Psoas muscle (tissue), 8 donors: ENCODE measurements at regions of chr6 and their contacts with region 1.

Region 1: DNA sequence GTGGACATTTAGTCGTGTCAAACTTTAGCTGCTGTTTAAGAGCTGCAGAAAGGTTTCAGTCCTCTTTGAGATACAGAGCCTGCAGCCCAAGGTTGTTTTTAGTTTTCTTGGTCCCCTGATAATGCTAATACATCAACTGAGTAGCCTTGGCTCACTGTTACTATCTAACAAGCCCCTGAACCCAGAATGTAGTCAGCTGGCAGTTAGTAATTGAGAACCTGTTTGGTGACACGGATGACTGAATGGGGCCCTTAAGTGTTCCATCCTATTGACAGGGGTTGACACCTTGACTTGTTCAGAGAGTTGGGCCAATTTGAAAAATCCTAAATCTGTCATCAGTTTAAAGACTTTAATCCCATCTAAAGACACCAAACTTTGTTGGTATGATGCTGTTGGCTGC is 2.8 kb downstream of the RTN4IP1 start:
- DNase-seq: no peak
- ATAC-seq: no peak
- H3K4me3 ChIP-seq: no peak overlapping the region
- H3K27ac ChIP-seq: no peak overlapping the region
- H3K4me1 ChIP-seq: peaks cover 11% of the 10 kb centered on the region
- H3K27me3 ChIP-seq: no peaks in the 10 kb centered on the region
- CTCF ChIP-seq: no peak

Region 2: DNA sequence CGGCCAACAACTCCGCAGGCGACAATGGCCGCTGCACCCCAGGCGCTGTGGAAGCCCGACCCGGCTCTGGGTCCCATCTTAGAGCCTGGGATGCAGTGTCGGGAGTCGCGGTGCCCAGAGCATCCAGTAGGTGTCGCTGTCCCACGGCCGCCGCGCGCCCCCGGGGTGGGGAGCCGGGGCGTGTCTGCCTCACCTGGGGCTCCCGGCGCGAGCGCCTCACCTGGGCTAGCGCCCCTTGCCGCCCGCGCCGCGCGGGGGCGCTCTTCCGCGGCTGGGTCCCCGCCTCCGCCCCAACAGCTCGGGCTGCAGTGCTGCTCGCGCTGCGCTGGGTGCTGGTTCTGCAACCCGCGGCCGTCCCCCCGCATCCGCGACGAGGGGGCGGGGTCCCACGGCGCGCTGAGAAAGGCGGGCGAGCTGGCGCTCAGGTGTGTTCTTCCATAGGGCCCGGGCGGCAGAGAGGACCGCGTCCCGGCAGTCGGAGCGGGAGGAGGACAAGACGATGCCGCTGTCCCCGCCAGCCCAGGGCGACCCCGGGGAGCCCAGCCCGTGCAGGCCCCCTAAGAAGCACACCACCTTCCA is 266.0 kb before region 1 on chr6 and contains the start of gene CRYBG1:
- intact Hi-C with region 1: no loop called
- DNase-seq: peak; percentile 45 to 61
- ATAC-seq: peak; percentile 52 to 76 (median 72)
- H3K4me3 ChIP-seq: peak within 1 kb of the TSS; percentile 61
- H3K27ac ChIP-seq: no peak within 1 kb of the TSS
- H3K4me1 ChIP-seq: peaks cover 3% of the 10 kb centered on the region
- H3K27me3 ChIP-seq: peaks cover 7 to 62% (median 10%) of the 10 kb centered on the region in 3 donors
- CTCF ChIP-seq: peak; percentile 62
- total RNA-seq, gene CRYBG1: 0.82 to 1.6 (median 1.3) TPM

Region 3: DNA sequence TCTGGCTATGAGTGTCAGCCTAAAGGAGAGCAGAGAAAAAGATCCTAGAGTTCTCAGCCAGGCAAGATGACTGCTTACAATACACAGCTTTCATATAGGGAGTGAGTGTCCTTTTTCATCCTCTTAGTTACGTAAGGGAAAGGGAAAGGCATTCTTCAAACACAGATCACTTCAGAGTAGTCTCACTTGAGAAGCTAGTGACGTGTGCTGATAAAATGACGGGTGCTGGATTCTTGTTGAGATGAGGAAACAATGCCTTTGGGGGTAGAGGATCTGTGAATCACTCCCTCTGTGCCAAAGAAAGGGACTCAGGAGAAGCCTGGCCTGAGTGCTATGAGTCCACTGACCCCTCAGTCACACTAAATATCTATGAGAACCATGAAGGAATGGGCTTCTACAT is 120.2 kb after region 1 on chr6:
- intact Hi-C with region 1: loop called in 1 of 2 experiments (anchors 2 kb)
- DNase-seq: no peak
- ATAC-seq: peak in 3 of 4 donors; percentile 37 to 70 (median 70)
- H3K4me3 ChIP-seq: no peak overlapping the region
- H3K27ac ChIP-seq: no peak overlapping the region
- H3K4me1 ChIP-seq: peaks cover 6% of the 10 kb centered on the region
- H3K27me3 ChIP-seq: peaks cover 0 to 3% (median 0%) of the 10 kb centered on the region in 3 donors
- CTCF ChIP-seq: no peak